ENCODE measurements at regions of chr1 and their contacts with region 1.

Region 1: DNA sequence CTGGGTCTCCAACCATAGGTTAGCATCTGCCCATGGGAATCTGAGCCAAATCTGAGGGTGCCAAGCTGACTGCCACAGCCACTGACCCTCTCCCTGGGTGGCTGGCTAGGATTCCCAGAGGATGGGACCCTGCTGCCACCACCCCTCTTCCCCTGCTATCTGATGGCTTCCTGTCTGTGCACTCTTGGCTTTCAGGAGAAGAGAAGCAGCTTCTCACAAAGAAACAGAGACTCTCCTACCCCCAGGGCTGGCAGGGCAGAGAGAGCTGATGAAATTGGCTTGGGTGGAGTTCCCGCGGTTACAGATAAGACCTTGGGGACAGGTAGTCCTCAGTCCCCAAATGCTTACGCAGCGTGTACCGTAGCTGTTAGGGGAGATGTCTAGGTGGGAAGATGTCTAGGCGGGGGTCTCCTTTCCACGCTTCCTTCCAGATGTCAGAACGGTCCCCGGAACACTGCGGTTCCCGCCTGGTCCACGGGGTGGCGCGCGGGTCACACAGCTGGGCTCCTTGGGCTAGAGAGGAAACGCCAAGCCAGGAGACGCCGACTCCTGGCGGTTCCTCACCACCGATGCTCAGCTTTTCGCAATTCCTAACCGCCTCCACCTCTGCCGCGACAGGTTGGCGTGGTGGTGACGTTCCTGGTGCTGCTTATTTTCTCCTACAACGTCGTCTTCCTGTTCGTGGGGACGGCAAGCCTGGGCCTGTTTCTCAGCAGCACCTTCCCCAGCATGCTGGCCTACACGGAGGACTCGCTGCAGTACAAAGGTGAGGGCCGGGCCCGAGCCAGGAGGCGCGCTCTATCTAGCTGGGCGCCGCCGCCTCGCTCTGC is 40.1 kb downstream of the ELK4 start:
- H3K4me3 ChIP-seq: peak overlapping the region; percentile 12
- H3K27ac ChIP-seq: no peak overlapping the region
- H3K4me1 ChIP-seq: no peaks in the 10 kb centered on the region; the same call in 1 of the 2 replicates
- CTCF ChIP-seq: peak; percentile 98

Region 2: GRCh38 chr1:205229399-205229871 is 362.3 kb before region 1 on chr1:
- CTCF ChIA-PET with region 1: no interaction called
- POLR2A ChIA-PET with region 1: no interaction called
- H3K4me3 ChIP-seq: peak overlapping the region; percentile 63
- H3K27ac ChIP-seq: no peak overlapping the region; the same call in 1 of the 2 replicates
- H3K4me1 ChIP-seq: peaks cover 19% of the 10 kb centered on the region
- CTCF ChIP-seq: 0 out of 2 replicates have a peak, but pooled peaks have one; percentile 19

Region 3: DNA sequence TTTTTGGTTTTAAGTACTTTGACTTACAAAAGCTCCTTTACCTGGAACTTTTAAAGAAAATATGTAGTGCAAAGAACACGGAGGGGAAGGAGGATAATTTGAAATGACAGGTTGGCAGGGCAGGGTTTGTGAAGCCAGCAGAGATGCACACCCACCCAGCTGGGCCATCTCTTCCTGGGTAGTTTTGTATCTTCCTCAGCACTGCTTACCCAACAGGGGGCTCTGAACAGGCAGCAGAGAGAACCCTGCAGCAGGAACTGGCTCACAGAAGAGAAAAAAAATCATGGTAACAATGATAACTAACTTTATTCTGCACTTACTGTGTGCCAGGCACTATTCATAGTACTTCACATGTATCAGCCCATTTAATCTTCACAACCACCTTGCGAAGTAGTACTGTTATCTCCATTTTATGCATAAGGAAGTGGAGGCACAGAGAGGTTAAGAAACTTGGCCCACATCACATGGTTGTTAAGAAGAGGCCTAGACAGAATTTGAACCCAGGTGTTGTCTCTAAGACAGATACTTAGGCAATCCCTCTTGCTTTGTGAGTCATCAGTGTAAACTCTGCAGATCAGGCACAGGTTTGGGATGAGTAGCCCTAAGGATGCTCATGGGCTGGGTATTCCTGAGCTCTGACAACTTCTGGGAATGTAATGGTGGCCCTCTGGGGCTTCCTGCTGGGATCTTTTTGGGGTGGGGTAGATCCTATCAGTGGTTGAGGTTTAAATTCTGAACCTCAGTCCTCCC is 20.8 kb before region 1 on chr1:
- CTCF ChIA-PET with region 1: interaction called, 13 read pairs
- POLR2A ChIA-PET with region 1: no interaction called
- H3K4me3 ChIP-seq: no peak overlapping the region
- H3K27ac ChIP-seq: no peak overlapping the region
- H3K4me1 ChIP-seq: peaks cover 6% of the 10 kb centered on the region
- CTCF ChIP-seq: no peak

Region 4: DNA sequence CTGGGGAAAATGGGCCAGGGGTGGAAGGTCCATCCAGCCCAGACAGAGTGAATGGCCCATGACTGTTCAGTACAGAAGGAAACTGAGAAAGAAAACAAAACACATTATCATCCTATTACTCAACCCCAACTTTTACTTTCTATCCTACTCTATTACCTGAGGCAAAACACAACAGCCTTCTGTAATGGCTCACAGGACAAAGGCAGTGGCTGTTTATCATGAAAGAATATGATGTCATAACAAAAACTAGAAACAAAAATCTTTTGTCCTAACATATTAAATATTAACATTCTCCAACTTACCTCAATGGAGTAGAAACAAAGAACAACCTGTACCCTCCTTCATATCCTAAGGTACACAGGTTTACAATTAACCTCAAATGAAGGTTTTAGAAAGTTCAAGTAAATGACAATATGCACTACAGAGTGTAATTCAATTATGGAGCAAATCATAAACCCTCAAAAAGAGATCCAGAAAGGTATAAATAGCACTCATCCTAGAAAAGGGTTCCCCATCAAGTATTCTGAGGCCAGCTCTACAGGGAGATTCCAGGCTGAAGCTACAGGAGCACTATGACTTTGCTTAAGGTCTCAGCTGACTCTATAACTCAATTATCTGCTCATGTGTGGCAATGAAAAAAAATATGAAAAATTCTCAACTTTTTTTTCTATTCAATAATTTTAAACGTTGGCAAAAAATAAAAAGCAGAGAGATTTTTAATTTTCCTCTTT is 25.0 kb after region 1 on chr1:
- CTCF ChIA-PET with region 1: interaction called, 11 read pairs
- POLR2A ChIA-PET with region 1: interaction called, 5 read pairs
- H3K4me3 ChIP-seq: no peak overlapping the region
- H3K27ac ChIP-seq: no peak overlapping the region
- H3K4me1 ChIP-seq: no peaks in the 10 kb centered on the region
- CTCF ChIP-seq: no peak

Region 5: DNA sequence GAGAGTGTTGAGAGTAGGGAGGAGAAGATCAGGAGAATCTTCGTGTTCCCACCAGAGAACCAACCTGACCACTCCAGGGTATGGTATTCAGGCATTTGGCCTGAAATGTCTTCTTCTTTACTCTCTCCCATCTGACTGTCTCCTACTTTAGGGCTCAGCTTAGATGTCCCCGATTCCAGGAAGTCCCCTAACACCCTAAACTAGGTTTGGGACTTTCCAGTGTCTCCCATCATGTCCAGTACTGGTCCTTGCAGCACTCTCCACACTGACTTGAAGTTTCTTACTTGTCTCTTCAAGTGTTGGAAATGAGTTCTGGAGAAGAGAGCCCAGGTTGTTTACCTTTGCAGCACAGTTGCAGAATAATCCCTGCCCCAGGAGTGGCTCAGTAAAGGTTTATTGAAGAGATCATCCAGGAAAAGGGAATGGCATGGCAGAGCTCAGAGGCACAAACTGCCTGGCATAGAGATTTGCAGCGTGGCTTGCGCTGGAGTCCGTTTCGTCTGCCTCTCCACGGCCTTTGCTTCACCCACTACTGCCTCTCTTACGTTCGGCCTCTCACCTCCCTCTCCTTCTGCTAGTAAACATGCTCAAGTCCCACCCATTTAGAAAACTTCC is 46.2 kb after region 1 on chr1:
- CTCF ChIA-PET with region 1: interaction called, 32 read pairs
- POLR2A ChIA-PET with region 1: no interaction called
- H3K4me3 ChIP-seq: no peak overlapping the region
- H3K27ac ChIP-seq: no peak overlapping the region
- H3K4me1 ChIP-seq: no peaks in the 10 kb centered on the region
- CTCF ChIP-seq: no peak

Region 6: DNA sequence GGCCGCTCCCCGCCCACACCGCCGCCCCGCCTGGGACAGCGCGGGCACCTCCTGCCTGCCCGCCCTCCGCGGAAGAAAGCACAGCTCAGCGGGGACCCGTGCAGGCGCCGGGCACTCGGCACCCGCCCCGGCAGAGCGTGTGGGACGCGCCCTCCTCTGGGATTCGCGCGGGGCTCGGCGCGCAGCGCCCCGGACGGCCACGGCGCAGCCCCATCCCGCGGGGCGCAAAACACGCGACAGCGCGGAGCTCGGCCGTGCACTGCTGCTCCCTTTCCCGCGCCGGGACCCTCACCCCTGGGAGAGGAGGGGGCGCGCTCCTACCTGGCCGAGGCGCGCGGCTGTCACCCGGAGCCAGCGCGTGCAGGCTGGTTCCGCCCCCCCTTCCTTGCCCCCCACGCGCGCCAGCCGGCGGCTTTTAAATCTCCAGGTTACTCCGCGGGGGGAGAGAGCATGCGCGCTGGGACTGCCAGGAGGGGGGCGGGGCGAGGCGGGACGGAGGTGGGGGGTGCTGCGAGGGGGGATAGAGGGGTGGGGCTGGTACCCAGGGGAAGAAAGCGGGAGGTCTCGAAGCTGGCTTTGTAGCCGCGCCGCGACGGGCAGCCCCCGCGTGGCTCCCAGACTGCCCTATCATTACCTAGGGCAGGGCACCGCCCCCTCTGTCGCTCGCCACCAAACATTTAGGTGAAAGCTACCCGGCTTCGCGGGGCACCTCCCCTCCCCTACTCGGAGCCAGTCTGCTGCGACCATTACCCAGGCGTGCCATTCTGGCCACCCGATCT is 88.5 kb after region 1 on chr1 and contains the start of gene SLC45A3:
- CTCF ChIA-PET with region 1: interaction called, 10 read pairs
- POLR2A ChIA-PET with region 1: no interaction called
- H3K4me3 ChIP-seq: peak within 1 kb of the TSS; percentile 67
- H3K27ac ChIP-seq: peak within 1 kb of the TSS; percentile 58; the same call in 1 of the 2 replicates
- H3K4me1 ChIP-seq: no peaks in the 10 kb centered on the region
- CTCF ChIP-seq: no peak

Region 7: DNA sequence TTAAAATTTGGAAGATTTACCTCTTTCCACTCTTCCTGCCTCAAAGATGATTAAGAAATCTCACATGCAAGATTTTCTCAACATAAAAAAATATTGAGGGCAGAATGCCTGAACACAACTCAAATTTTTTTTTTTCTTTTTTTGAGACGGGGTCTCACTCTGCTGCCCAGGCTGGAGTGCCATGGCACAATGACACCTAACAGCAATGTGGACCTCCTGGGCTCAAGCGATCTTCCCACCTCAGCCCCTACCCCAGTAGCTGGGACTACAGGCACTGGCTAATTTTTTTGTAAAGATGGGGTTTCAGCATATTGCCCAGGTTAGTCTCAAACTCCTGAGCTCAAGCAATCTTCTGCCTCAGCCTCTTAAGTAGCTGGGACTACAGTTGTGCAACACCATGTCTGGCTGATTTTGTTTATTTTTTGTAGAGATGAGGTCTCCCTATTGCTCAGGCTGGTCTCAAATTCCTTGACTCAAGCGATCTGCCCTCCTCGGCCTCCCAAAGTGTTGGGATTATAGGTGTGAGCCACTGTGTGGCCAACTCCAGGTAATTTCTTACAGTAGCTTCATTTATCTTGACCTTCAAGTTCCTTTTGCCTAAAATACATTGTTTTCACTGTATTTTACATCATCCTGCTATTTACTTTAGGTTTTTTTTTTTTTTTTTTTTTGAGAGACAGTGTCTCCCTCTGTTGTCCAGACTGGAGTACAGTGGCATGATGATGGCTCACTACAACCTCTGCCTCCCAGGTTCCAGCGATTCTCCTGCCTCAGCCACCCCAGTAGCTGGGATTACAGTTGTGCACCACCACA is 147.8 kb after region 1 on chr1:
- CTCF ChIA-PET with region 1: interaction called, 12 read pairs
- POLR2A ChIA-PET with region 1: no interaction called
- H3K4me3 ChIP-seq: no peak overlapping the region
- H3K27ac ChIP-seq: no peak overlapping the region
- H3K4me1 ChIP-seq: peaks cover 17% of the 10 kb centered on the region
- CTCF ChIP-seq: peak; percentile 40; the same call in 1 of the 2 replicates

Measured in HEK293 (cell line).